Activated B cell treated with CpG ODN at 0.5 μM for 24 hours (primary cell): ENCODE measurements at regions of chr5 and their contacts with region 1.

Region 1: DNA sequence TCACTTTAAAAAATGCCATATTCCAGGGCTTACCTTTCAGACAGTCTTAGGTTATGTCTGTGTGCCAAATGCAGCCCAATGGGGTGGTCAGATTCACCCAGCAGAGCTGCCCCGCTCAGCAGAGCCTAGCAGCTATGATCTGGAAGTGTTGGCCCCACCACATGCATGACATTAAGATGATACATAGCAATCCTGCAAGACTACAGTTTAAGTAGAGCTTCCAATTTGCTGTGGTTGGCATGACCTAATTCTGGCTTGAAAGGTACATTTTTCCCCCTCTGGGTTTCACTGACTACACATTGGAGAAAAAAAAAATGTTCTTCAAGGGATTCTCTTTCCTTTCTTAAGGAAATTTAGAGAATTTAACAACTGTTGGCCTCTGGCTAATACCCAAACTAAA is 22.5 kb downstream of the MEF2C start:
- DNase-seq: no peak
- ATAC-seq: no peak
- H3K4me3 Mint-ChIP-seq: no peak overlapping the region
- H3K27ac Mint-ChIP-seq: peak overlapping the region; percentile 12
- H3K4me1 Mint-ChIP-seq: peaks cover 30% of the 10 kb centered on the region
- H3K27me3 Mint-ChIP-seq: no peaks in the 10 kb centered on the region
- CTCF ChIP-seq: no peak

Region 2: DNA sequence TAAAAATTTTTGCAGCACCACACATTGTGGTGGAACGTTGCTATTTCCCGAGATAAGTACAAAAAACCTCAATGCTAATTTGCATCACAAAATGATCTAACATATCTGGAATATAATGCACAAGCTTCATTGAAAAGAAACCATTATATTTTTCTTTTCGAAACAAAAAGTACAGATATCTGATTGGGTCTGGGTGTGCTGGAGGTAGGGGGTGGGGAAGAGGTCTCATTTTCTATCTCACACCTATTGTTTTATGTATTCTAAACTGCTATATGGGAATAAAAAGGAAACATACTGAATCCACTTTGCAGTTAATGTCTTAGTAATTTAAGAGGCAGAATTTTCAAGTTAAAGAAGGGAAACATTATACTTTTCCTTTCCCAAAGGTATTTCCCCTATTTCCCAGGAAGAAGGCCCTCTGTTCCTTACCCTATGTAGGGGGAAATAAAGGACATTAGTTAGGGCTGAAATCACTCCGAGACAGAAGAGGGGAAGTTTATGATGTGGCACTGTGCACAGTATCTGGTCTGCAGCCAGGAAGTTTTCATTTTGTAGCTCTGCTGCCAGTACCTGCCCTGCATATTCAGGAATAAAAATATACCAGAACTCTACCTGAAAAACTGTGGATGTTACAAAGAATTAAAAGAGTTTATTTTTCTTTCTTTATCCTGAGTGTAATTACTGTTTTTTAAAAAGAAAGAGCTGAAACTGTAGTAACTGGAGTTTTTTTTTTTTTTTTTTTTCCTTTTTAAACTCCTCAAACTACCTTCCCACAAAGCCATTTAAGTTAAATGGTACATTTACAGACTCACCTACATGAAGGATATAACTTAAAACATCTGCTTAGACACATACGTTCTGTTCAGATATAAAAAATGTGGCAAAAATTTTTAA is 15.1 kb after region 1 on chr5:
- CTCF ChIA-PET with region 1: no interaction called
- POLR2A ChIA-PET with region 1: interaction called, 15 read pairs
- intact Hi-C with region 1: no loop called
- DNase-seq: no peak
- ATAC-seq: peak; percentile 45
- H3K4me3 Mint-ChIP-seq: peak overlapping the region; percentile 63
- H3K27ac Mint-ChIP-seq: peak overlapping the region; percentile 68
- H3K4me1 Mint-ChIP-seq: peaks cover 68% of the 10 kb centered on the region
- H3K27me3 Mint-ChIP-seq: no peaks in the 10 kb centered on the region
- CTCF ChIP-seq: no peak